H1 (cell line): ENCODE measurements at regions of chr6 and their contacts with region 1.

Region 1: DNA sequence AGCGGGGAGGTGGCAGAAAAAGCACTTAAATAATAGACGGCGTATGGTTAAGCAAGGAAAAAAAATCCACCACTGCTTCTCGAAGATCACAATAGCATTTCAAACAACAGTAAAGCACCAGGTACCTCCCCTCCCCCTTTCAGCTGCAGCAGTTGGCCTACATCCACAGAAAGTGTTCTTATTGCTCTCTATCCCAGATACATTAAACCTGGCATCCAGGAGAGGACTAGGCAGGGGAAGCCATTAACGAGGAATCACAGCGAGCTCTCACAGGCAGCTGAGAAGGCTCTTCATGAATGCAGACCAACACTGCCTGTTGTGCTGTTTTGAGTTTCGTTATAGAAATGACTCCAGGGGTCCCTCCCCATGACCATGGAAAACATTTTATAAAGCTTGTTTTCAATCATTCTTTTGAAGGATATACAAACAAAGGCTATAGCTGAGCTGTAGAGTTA is 11.8 kb downstream of the FYN start:
- DNase-seq: no peak
- H3K4me3 ChIP-seq: no peak overlapping the region
- H3K27ac ChIP-seq: no peak overlapping the region
- H3K4me1 ChIP-seq: peaks cover 9 to 44% (median 32%) of the 10 kb centered on the region in 4 experiments; a peak in 6 of 7 replicates
- H3K27me3 ChIP-seq: no peaks in the 10 kb centered on the region
- CTCF ChIP-seq: no peak
- EP300 ChIP-seq: no peak
- POLR2A ChIP-seq: no peak
- RAD21 ChIP-seq: no peak

Region 2: GRCh38 chr6:111812060-111813038 is 49.1 kb before region 1 on chr6:
- CTCF ChIA-PET with region 1: no interaction called
- POLR2A ChIA-PET with region 1: no interaction called
- DNase-seq: no peak
- H3K4me3 ChIP-seq: no peak overlapping the region
- H3K27ac ChIP-seq: no peak overlapping the region
- H3K4me1 ChIP-seq: peaks cover 0 to 3% (median 0%) of the 10 kb centered on the region in 4 experiments; a peak in 1 of 7 replicates
- H3K27me3 ChIP-seq: no peaks in the 10 kb centered on the region
- CTCF ChIP-seq: no peak
- EP300 ChIP-seq: no peak
- POLR2A ChIP-seq: no peak
- RAD21 ChIP-seq: no peak

Region 3: GRCh38 chr6:111845441-111845871 is 16.0 kb before region 1 on chr6:
- CTCF ChIA-PET with region 1: interaction called, 29 read pairs
- POLR2A ChIA-PET with region 1: interaction called, 3 read pairs
- DNase-seq: no peak
- H3K4me3 ChIP-seq: no peak overlapping the region
- H3K27ac ChIP-seq: no peak overlapping the region
- H3K4me1 ChIP-seq: peaks cover 16 to 35% (median 28%) of the 10 kb centered on the region in 4 experiments
- H3K27me3 ChIP-seq: no peaks in the 10 kb centered on the region
- CTCF ChIP-seq: no peak
- EP300 ChIP-seq: no peak
- POLR2A ChIP-seq: no peak
- RAD21 ChIP-seq: no peak

Region 4: GRCh38 chr6:111959766-111960165 is 98.3 kb after region 1 on chr6:
- CTCF ChIA-PET with region 1: no interaction called
- POLR2A ChIA-PET with region 1: no interaction called
- DNase-seq: no peak
- H3K4me3 ChIP-seq: no peak overlapping the region
- H3K27ac ChIP-seq: no peak overlapping the region
- H3K4me1 ChIP-seq: peaks cover 0 to 6% (median 3%) of the 10 kb centered on the region in 4 experiments; a peak in 5 of 7 replicates
- H3K27me3 ChIP-seq: no peaks in the 10 kb centered on the region; a peak in 2 of 7 replicates
- CTCF ChIP-seq: no peak
- EP300 ChIP-seq: no peak
- POLR2A ChIP-seq: no peak
- RAD21 ChIP-seq: no peak

Region 5: GRCh38 chr6:111997078-111997852 is 135.8 kb after region 1 on chr6:
- CTCF ChIA-PET with region 1: interaction called, 10 read pairs
- POLR2A ChIA-PET with region 1: no interaction called
- DNase-seq: peak; percentile 64 to 85
- H3K4me3 ChIP-seq: no peak overlapping the region
- H3K27ac ChIP-seq: no peak overlapping the region
- H3K4me1 ChIP-seq: peaks cover 0 to 6% (median 1%) of the 10 kb centered on the region in 4 experiments; a peak in 1 of 7 replicates
- H3K27me3 ChIP-seq: no peaks in the 10 kb centered on the region
- CTCF ChIP-seq: peak; percentile 82 to 93 (median 92)
- EP300 ChIP-seq: no peak
- POLR2A ChIP-seq: no peak
- RAD21 ChIP-seq: peak; percentile 100